ENCODE measurements at regions of chr10 and their contacts with region 1.

Region 1: GRCh38 chr10:103828107-103828506 is 27.3 kb downstream of the SH3PXD2A start:
- DNase-seq: peak; percentile 30 to 85
- H3K4me3 ChIP-seq: no peak overlapping the region
- H3K27ac ChIP-seq: peak overlapping the region; percentile 60
- H3K4me1 ChIP-seq: peaks cover 17% of the 10 kb centered on the region
- H3K27me3 ChIP-seq: no peaks in the 10 kb centered on the region
- CTCF ChIP-seq: no peak

Region 2: DNA sequence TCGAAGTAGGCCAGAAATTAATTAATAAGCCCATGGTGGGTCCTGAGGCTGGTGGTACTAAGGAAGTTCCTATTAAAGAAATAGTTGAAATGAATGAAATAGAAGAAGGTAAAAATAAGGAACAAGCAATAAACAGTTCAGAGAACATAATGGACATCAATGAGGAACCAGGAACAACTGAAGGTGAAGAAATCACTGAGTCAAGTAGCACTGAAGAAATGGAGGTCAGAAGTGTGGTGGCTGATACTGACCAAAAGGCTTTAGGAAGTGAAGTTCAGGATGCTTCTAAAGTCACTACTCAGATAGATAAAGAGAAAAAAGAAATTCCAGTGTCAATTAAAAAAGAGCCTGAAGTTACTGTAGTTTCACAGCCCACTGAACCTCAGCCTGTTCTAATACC is 174.8 kb after region 1 on chr10:
- CTCF ChIA-PET with region 1: no interaction called
- POLR2A ChIA-PET with region 1: interaction called, 11 read pairs
- intact Hi-C with region 1: no loop called
- DNase-seq: no peak
- H3K4me3 ChIP-seq: no peak overlapping the region
- H3K27ac ChIP-seq: no peak overlapping the region
- H3K4me1 ChIP-seq: no peaks in the 10 kb centered on the region
- H3K27me3 ChIP-seq: no peaks in the 10 kb centered on the region
- CTCF ChIP-seq: no peak